Activated CD4-positive, alpha-beta memory T cell treated with anti-CD3 and anti-CD28 coated beads for 36 hours (primary cell): ENCODE measurements at regions of chr17 and their contacts with region 1.

Region 1: DNA sequence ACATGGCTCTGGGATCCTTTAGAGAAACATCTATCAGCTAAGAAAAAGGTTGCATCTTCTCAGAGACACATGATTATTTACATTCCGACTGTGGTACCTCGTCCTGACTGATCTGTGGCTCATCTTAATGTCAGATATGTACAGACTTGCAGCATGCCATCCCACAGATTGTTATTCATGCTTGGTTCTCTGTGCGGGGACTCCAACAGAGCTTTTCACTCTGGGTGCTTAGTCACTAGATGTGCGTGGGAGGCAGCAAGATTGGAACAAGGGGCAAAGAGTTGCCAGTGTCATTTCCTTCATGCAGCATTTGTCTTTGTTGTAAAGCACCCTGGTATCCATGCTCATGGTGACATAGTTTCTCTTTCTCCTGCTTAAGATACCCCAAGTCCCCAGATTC is 179.1 kb upstream of the CACNG5 start:
- DNase-seq: peak; percentile 85
- H3K4me3 Mint-ChIP-seq: no peak overlapping the region
- H3K27ac Mint-ChIP-seq: peak overlapping the region; percentile 68
- H3K4me1 Mint-ChIP-seq: peaks cover 54% of the 10 kb centered on the region
- H3K27me3 Mint-ChIP-seq: no peaks in the 10 kb centered on the region

Region 2: DNA sequence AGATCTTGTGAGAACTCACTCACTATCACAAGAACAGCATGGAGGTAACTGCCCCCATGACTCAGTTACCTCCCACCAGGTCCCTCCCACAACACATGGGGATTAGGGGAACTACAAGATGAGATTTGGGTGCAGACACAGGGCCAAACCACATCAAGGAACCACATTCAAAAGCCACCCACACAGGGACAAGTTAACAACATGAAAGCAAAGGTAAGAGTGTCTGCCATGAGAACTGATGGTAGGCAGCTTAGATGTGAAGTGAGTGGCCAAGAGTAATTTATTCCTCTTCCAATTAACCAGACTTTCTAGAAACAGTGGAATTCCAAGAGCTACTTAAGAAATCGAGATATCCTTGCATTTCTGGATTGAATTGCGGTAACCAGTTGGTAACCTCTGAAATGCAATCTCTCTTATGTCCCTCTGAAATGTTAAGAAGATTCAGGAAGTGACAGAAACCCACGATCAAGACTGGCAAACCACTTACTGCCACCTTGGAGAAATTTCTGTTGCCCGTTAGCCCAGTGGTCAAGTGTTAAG is 11.7 kb after region 1 on chr17:
- CTCF ChIA-PET with region 1: interaction called, 3 read pairs
- POLR2A ChIA-PET with region 1: interaction called, 4 read pairs
- intact Hi-C with region 1: loop called (anchors 1 kb)
- DNase-seq: peak; percentile 85
- H3K4me3 Mint-ChIP-seq: peak overlapping the region; percentile 31
- H3K27ac Mint-ChIP-seq: peak overlapping the region; percentile 69
- H3K4me1 Mint-ChIP-seq: peaks cover 80% of the 10 kb centered on the region
- H3K27me3 Mint-ChIP-seq: no peaks in the 10 kb centered on the region

Region 3: GRCh38 chr17:66791347-66791746 is 135.5 kb after region 1 on chr17:
- CTCF ChIA-PET with region 1: no interaction called
- POLR2A ChIA-PET with region 1: no interaction called
- intact Hi-C with region 1: no loop called
- DNase-seq: no peak
- H3K4me3 Mint-ChIP-seq: no peak overlapping the region
- H3K27ac Mint-ChIP-seq: no peak overlapping the region
- H3K4me1 Mint-ChIP-seq: no peaks in the 10 kb centered on the region
- H3K27me3 Mint-ChIP-seq: no peaks in the 10 kb centered on the region

Region 4: GRCh38 chr17:66855204-66855603 is 199.3 kb after region 1 on chr17:
- CTCF ChIA-PET with region 1: no interaction called
- POLR2A ChIA-PET with region 1: no interaction called
- intact Hi-C with region 1: no loop called
- DNase-seq: peak; percentile 60
- H3K4me3 Mint-ChIP-seq: no peak overlapping the region
- H3K27ac Mint-ChIP-seq: no peak overlapping the region
- H3K4me1 Mint-ChIP-seq: no peaks in the 10 kb centered on the region
- H3K27me3 Mint-ChIP-seq: no peaks in the 10 kb centered on the region

Region 5: DNA sequence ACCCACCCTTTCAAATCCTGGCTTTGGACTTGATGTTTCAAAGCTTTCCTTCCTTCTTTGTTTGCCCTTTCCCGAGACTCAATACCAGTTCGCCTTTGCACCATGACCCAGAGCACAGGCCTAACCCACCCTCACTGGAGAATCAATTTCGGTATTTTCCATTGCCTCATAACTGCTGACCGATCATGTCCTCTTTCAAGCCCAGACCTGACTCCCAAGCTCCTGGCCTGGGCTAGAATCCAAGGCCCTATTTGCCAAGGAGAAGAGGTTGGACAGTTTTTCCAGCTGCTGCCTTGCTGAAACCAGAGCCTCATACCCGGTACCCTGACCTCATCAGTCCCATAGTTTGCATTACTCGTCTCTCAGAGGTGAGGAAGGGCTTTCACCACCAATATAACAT is 624.4 kb after region 1 on chr17:
- CTCF ChIA-PET with region 1: no interaction called
- POLR2A ChIA-PET with region 1: no interaction called
- intact Hi-C with region 1: no loop called
- DNase-seq: no peak
- H3K4me3 Mint-ChIP-seq: no peak overlapping the region
- H3K27ac Mint-ChIP-seq: no peak overlapping the region
- H3K4me1 Mint-ChIP-seq: no peaks in the 10 kb centered on the region
- H3K27me3 Mint-ChIP-seq: no peaks in the 10 kb centered on the region